Activated T-helper 2 cell treated with anti-CD3 and anti-CD28 coated beads, Interferon-gamma antibody, Interleukin-2, Interleukin-4, amounts not matched to agents 10 μg/mL and 5 μg/mL and 100 μg/mL, durations not matched to agents 14 hours and 24 hours and 36 hours (primary cell): ENCODE measurements at regions of chr9 and their contacts with region 1.

Region 1: GRCh38 chr9:33159760-33160127 is 7.4 kb downstream of the B4GALT1 start:
- DNase-seq: peak; percentile 46
- H3K4me3 Mint-ChIP-seq: peak overlapping the region; percentile 76
- H3K27ac Mint-ChIP-seq: peak overlapping the region; percentile 97
- H3K4me1 Mint-ChIP-seq: peaks cover 85% of the 10 kb centered on the region
- H3K27me3 Mint-ChIP-seq: no peaks in the 10 kb centered on the region

Region 2: GRCh38 chr9:32431940-32432555 is 727.7 kb before region 1 on chr9:
- intact Hi-C with region 1: no loop called
- DNase-seq: no peak
- H3K4me3 Mint-ChIP-seq: no peak overlapping the region
- H3K27ac Mint-ChIP-seq: no peak overlapping the region
- H3K4me1 Mint-ChIP-seq: peaks cover 4% of the 10 kb centered on the region
- H3K27me3 Mint-ChIP-seq: no peaks in the 10 kb centered on the region

Region 3: GRCh38 chr9:33082538-33083326 is 77.0 kb before region 1 on chr9:
- intact Hi-C with region 1: loop called (anchors 1 kb)
- DNase-seq: no peak
- H3K4me3 Mint-ChIP-seq: peak overlapping the region; percentile 50
- H3K27ac Mint-ChIP-seq: peak overlapping the region; percentile 91
- H3K4me1 Mint-ChIP-seq: peaks cover 31% of the 10 kb centered on the region
- H3K27me3 Mint-ChIP-seq: no peaks in the 10 kb centered on the region

Region 4: DNA sequence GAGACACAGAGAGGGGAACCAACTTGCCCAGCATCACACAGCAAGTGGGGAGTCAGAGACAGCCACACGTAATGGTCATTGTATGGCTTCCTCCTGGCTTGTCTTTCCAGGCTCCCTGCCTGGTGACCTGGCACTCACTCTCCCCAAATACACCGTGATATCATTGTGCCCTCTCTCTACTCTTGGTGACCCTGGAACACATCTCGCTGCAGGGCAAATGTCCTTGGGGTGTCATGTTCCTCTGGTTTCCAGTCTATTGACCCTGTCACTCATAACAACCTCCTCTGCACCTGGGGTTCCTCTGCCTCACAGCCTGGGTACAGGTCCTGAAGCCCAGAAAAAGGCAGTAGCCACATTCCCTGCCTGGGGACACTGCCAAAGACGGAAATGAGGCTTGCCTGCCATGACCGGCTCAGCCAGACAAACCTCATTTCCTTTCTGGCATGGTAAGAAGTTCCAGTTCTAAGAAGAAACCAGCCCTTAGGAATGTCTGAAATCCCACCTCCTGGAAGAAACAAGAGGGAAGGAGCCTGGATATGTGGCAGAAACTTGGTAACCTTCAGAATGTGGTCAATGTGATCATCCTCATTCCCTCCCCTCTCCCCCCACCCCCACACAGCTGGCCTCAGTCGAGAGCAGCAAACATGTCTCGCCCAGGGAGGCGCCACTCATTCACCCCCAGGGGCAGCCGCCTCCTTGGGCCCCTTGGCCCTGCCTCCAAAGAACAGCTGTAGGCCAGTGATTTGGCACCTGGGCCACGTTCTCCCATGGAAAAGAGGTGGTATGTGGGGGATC is 52.7 kb before region 1 on chr9:
- intact Hi-C with region 1: no loop called
- DNase-seq: no peak
- H3K4me3 Mint-ChIP-seq: no peak overlapping the region
- H3K27ac Mint-ChIP-seq: no peak overlapping the region
- H3K4me1 Mint-ChIP-seq: peaks cover 2% of the 10 kb centered on the region
- H3K27me3 Mint-ChIP-seq: no peaks in the 10 kb centered on the region

Region 5: DNA sequence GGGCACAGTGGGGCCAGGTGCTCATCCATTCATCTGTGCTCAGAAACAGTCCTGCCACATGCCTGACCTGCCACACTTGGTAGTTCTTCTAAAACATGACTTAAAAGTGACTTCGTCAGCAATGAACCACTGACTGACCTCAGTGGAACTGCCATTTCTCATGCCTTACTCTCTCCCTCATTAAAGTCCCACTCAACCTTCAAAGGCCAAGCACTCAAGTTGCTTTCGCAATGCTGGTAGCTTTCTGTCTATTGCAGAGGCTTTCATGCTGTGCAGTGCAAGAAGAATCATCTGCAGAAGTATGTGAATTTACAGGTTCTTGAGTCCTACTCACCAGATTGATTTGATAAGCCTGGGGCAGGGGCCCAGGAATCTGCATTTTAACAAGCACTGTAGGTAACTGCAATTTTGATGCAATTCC is 16.5 kb before region 1 on chr9:
- intact Hi-C with region 1: loop called (anchors 2 kb)
- DNase-seq: no peak
- H3K4me3 Mint-ChIP-seq: peak overlapping the region; percentile 26
- H3K27ac Mint-ChIP-seq: peak overlapping the region; percentile 21
- H3K4me1 Mint-ChIP-seq: peaks cover 47% of the 10 kb centered on the region
- H3K27me3 Mint-ChIP-seq: no peaks in the 10 kb centered on the region